Upper lobe of right lung (tissue), 1 donor: ENCODE measurements at regions of chr19 and their contacts with region 1.

Region 1: DNA sequence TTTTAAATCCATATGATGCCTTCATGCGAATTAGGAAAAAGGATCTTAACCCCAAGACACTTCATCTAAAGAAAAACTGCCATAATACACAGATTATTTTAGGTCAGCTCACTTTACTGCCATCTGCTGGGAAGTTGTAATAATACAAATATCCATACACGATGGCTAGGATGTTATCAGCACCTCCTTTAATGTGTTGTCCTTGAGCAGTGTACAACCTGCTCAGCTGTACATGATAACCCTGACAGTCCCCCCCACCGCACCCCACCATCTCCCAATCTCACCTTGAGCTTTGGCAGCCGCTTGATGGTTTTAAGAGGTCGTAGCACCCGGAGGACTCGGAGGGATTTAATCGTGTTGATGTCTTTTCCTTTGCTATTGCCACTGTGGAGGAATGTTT is 112.2 kb downstream of the IER2 start:
- DNase-seq: no peak
- ATAC-seq: peak; percentile 79
- H3K4me3 ChIP-seq: no peak overlapping the region
- H3K27ac ChIP-seq: no peak overlapping the region
- H3K4me1 ChIP-seq: no peaks in the 10 kb centered on the region
- H3K27me3 ChIP-seq: no peaks in the 10 kb centered on the region
- CTCF ChIP-seq: peak; percentile 61

Region 2: GRCh38 chr19:13033819-13034611 is 228.4 kb before region 1 on chr19:
- intact Hi-C with region 1: no loop called
- DNase-seq: peak; percentile 87
- ATAC-seq: peak; percentile 78
- H3K4me3 ChIP-seq: no peak overlapping the region
- H3K27ac ChIP-seq: peak overlapping the region; percentile 58
- H3K4me1 ChIP-seq: peaks cover 96% of the 10 kb centered on the region
- H3K27me3 ChIP-seq: no peaks in the 10 kb centered on the region
- CTCF ChIP-seq: peak; percentile 71

Region 3: GRCh38 chr19:13195678-13196077 is 66.8 kb before region 1 on chr19:
- intact Hi-C with region 1: loop called (anchors 5 kb)
- DNase-seq: no peak
- ATAC-seq: peak; percentile 79
- H3K4me3 ChIP-seq: no peak overlapping the region
- H3K27ac ChIP-seq: no peak overlapping the region
- H3K4me1 ChIP-seq: peaks cover 5% of the 10 kb centered on the region
- H3K27me3 ChIP-seq: no peaks in the 10 kb centered on the region
- CTCF ChIP-seq: peak; percentile 15

Region 4: DNA sequence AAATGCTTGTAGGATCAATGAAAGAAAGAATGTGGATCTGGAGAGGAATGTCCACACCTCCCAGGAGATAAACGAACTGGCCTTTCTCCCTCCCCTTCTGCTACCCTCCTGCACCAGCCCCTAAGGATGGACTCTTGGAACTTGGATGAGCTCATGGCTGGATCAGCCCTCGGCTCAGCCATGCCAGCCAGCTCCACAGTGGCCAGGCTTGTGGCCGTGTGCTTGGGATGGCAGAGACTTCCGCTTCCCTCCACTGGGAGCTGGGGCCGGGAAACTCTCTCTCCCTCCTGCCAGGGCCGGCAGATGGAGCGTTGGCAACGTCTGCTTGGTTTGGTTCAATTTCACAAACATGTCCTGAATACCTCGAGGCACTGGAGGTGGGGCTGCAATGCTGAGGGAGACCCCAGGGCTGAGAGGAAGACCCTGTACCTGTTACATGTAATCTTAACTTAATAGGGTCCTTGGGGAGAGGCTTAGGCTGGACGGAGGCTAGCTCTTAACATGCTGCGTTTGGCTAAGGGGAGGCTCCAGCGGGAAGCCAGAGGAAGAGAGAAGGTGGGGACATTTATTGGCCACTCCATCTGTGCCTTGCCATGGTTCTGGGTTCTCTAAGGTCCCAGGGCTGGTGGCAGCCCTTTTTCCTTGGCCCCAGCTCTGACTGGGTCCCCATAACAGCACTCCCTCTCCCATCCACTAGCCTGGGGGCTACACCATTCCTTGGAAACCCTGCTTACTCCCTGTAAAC is 40.2 kb after region 1 on chr19:
- intact Hi-C with region 1: no loop called
- DNase-seq: no peak
- ATAC-seq: no peak
- H3K4me3 ChIP-seq: no peak overlapping the region
- H3K27ac ChIP-seq: no peak overlapping the region
- H3K4me1 ChIP-seq: no peaks in the 10 kb centered on the region
- H3K27me3 ChIP-seq: peaks cover 46% of the 10 kb centered on the region
- CTCF ChIP-seq: no peak